CD8-positive, alpha-beta T cell (primary cell): ENCODE measurements at regions of chr17 and their contacts with region 1.

Region 1: GRCh38 chr17:43576563-43577229 is 30.6 kb upstream of the ETV4 start:
- DNase-seq: peak; percentile 37 to 83 (median 59)
- ATAC-seq: peak; percentile 71
- H3K4me3 ChIP-seq: no peak overlapping the region
- H3K4me3 Mint-ChIP-seq: no peak overlapping the region
- H3K27ac ChIP-seq: no peak overlapping the region
- H3K27ac Mint-ChIP-seq: no peak overlapping the region
- H3K4me1 ChIP-seq: peaks cover 14% of the 10 kb centered on the region
- H3K4me1 Mint-ChIP-seq: peaks cover 14% of the 10 kb centered on the region
- H3K27me3 ChIP-seq: no peaks in the 10 kb centered on the region
- H3K27me3 Mint-ChIP-seq: peaks cover 2% of the 10 kb centered on the region
- CTCF ChIP-seq: peak; percentile 98

Region 2: DNA sequence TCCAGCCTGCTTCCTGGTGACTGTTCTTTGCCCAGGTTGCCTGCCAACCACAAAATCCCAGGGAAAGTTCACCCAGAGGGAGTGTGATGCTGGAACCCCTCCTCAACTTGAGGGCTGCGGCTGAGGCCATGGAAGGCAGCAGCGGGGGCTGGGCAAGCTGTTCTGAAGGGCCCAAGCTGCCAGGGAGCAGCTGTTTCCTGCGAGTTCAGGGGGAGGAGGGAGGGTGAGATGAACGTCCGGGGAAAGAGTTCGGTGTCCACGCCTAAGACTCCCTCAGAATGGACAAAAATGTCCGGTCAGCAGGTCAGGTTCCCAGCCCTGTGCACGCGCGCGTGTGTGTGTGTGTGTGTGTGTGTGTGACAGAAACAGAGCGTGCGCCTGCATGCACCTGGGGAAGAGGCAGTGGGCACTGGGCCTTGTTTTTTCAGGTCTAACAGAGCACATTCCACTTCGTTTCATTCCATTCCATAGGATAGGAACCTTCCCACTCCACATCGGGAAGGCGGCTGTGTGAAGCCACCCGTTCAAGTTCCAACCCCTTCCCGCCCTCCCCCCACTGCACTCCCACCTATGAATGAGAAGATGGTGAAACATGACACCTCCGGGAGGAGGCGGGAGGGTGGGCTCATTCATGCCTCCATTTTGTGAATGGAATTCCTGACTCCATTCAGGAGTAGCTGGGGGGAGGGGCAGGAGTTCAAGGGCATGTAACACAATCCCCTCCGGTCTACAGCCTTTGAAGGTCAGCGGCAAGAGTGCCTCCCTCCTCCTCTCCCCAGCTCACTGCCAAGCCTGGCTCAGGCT is 46.2 kb before region 1 on chr17:
- CTCF ChIA-PET with region 1: no interaction called
- POLR2A ChIA-PET with region 1: no interaction called
- intact Hi-C with region 1: no loop called
- DNase-seq: no peak
- ATAC-seq: no peak
- H3K4me3 ChIP-seq: no peak overlapping the region
- H3K4me3 Mint-ChIP-seq: no peak overlapping the region
- H3K27ac ChIP-seq: no peak overlapping the region
- H3K27ac Mint-ChIP-seq: no peak overlapping the region
- H3K4me1 ChIP-seq: no peaks in the 10 kb centered on the region
- H3K4me1 Mint-ChIP-seq: no peaks in the 10 kb centered on the region
- H3K27me3 ChIP-seq: no peaks in the 10 kb centered on the region
- H3K27me3 Mint-ChIP-seq: no peaks in the 10 kb centered on the region
- CTCF ChIP-seq: no peak

Region 3: GRCh38 chr17:43645765-43646481 is 69.2 kb after region 1 on chr17:
- CTCF ChIA-PET with region 1: interaction called, 17 read pairs
- POLR2A ChIA-PET with region 1: no interaction called
- intact Hi-C with region 1: no loop called
- DNase-seq: peak in 5 of 9 experiments; percentile 6 to 33 (median 19)
- ATAC-seq: peak; percentile 51
- H3K4me3 ChIP-seq: peak overlapping the region in 1 of 2 experiments; percentile 30
- H3K4me3 Mint-ChIP-seq: peak overlapping the region; percentile 55
- H3K27ac ChIP-seq: no peak overlapping the region
- H3K27ac Mint-ChIP-seq: peak overlapping the region; percentile 32
- H3K4me1 ChIP-seq: peaks cover 1% of the 10 kb centered on the region
- H3K4me1 Mint-ChIP-seq: peaks cover 18% of the 10 kb centered on the region
- H3K27me3 ChIP-seq: no peaks in the 10 kb centered on the region
- H3K27me3 Mint-ChIP-seq: peaks cover 16% of the 10 kb centered on the region
- CTCF ChIP-seq: no peak

Region 4: DNA sequence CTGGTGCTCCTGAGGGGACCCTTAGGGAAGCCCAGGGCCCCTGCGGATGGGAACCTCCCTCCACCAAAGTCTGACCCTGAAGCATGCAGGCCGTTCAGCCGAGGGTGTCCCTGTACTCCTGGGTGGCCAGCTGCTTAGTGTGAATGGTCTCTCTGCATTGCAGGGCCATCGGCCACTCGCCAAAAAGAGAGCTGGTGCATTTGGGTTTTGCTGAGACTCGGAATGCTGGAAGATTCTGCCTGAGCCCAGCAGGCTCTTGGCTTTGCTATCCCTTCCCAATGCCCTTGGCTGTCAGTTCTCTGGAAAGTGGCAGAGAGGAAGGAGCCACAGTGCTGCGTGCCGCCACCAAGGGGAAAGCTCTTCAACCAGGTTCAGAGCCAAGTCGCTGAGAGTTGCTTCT is 82.2 kb after region 1 on chr17:
- CTCF ChIA-PET with region 1: interaction called, 11 read pairs
- POLR2A ChIA-PET with region 1: no interaction called
- intact Hi-C with region 1: no loop called
- DNase-seq: no peak
- ATAC-seq: no peak
- H3K4me3 ChIP-seq: no peak overlapping the region
- H3K4me3 Mint-ChIP-seq: no peak overlapping the region
- H3K27ac ChIP-seq: no peak overlapping the region
- H3K27ac Mint-ChIP-seq: no peak overlapping the region
- H3K4me1 ChIP-seq: peaks cover 19% of the 10 kb centered on the region
- H3K4me1 Mint-ChIP-seq: peaks cover 32% of the 10 kb centered on the region
- H3K27me3 ChIP-seq: no peaks in the 10 kb centered on the region
- H3K27me3 Mint-ChIP-seq: peaks cover 3% of the 10 kb centered on the region
- CTCF ChIP-seq: no peak

Region 5: GRCh38 chr17:43665084-43665936 is 88.6 kb after region 1 on chr17:
- CTCF ChIA-PET with region 1: interaction called, 11 read pairs
- POLR2A ChIA-PET with region 1: no interaction called
- intact Hi-C with region 1: no loop called
- DNase-seq: no peak
- ATAC-seq: no peak
- H3K4me3 ChIP-seq: no peak overlapping the region
- H3K4me3 Mint-ChIP-seq: no peak overlapping the region
- H3K27ac ChIP-seq: no peak overlapping the region
- H3K27ac Mint-ChIP-seq: no peak overlapping the region
- H3K4me1 ChIP-seq: peaks cover 23% of the 10 kb centered on the region
- H3K4me1 Mint-ChIP-seq: peaks cover 24% of the 10 kb centered on the region
- H3K27me3 ChIP-seq: no peaks in the 10 kb centered on the region
- H3K27me3 Mint-ChIP-seq: peaks cover 2% of the 10 kb centered on the region
- CTCF ChIP-seq: no peak

Region 6: GRCh38 chr17:43673516-43674323 is 97.0 kb after region 1 on chr17:
- CTCF ChIA-PET with region 1: no interaction called
- POLR2A ChIA-PET with region 1: interaction called, 5 read pairs
- intact Hi-C with region 1: loop called (anchors 1 kb)
- DNase-seq: peak; percentile 53 to 79 (median 72)
- ATAC-seq: peak; percentile 76
- H3K4me3 ChIP-seq: no peak overlapping the region
- H3K4me3 Mint-ChIP-seq: no peak overlapping the region
- H3K27ac ChIP-seq: no peak overlapping the region
- H3K27ac Mint-ChIP-seq: no peak overlapping the region
- H3K4me1 ChIP-seq: peaks cover 9% of the 10 kb centered on the region
- H3K4me1 Mint-ChIP-seq: peaks cover 11% of the 10 kb centered on the region
- H3K27me3 ChIP-seq: no peaks in the 10 kb centered on the region
- H3K27me3 Mint-ChIP-seq: peaks cover 2% of the 10 kb centered on the region
- CTCF ChIP-seq: peak; percentile 86

Region 7: GRCh38 chr17:43760254-43760852 is 183.7 kb after region 1 on chr17:
- CTCF ChIA-PET with region 1: interaction called, 13 read pairs
- POLR2A ChIA-PET with region 1: no interaction called
- intact Hi-C with region 1: loop called (anchors 1 to 2 kb)
- DNase-seq: peak; percentile 76 to 92 (median 88)
- ATAC-seq: peak; percentile 98
- H3K4me3 ChIP-seq: no peak overlapping the region
- H3K4me3 Mint-ChIP-seq: no peak overlapping the region
- H3K27ac ChIP-seq: no peak overlapping the region
- H3K27ac Mint-ChIP-seq: no peak overlapping the region
- H3K4me1 ChIP-seq: no peaks in the 10 kb centered on the region
- H3K4me1 Mint-ChIP-seq: no peaks in the 10 kb centered on the region
- H3K27me3 ChIP-seq: peaks cover 0 to 7% of the 10 kb centered on the region in 2 experiments
- H3K27me3 Mint-ChIP-seq: peaks cover 22% of the 10 kb centered on the region
- CTCF ChIP-seq: peak; percentile 89

Region 8: DNA sequence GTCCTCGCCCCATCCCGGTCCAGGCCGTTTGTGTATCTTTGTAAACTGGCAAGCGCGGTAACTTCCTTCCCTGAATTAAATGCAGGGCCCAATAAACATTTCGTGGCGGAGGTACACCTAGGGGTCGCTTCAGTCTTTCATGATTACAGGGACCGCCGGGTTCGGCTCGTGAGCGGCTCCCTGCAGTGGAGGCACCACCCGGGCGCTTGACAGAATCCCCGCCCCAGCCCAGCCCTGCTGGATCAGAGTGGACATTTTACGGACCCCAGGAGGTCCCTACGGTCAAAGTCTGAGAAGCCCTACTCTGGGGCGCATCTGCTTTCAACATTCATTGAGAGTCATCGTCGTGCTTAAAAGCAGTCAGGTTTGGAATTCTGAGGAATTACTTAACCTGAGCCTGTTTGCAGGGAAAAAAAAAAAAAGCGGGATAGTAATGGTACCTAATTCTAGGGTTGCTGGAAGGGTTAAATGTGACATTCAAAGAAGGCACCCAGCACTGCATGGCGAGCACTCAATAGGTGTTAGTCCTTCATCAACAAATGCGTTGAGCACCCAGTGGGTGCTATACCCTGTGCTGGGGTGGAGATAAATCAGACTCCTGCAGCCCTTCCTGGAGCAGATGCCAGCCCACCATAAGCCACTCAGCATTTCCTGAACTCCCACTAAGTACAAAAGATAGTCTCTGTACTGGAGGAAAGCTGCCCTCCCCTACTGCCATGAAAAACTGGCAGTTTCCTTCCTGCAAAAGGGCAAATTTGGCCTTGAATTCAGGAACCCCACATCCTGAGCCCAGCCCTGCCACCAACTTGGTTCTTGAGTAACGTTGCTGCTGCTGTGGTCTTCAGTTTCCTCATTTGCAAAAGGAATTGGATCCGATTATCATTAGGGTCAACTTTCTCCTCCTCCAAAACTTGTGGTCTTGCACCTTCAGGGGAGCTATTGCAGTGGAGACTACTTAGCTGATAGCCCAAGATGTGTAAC is 202.7 kb after region 1 on chr17:
- CTCF ChIA-PET with region 1: no interaction called
- POLR2A ChIA-PET with region 1: no interaction called
- intact Hi-C with region 1: no loop called
- DNase-seq: no peak
- ATAC-seq: peak; percentile 47
- H3K4me3 ChIP-seq: peak overlapping the region; percentile 75 to 88
- H3K4me3 Mint-ChIP-seq: peak overlapping the region; percentile 78
- H3K27ac ChIP-seq: peak overlapping the region; percentile 43 to 44
- H3K27ac Mint-ChIP-seq: no peak overlapping the region
- H3K4me1 ChIP-seq: peaks cover 11% of the 10 kb centered on the region
- H3K4me1 Mint-ChIP-seq: peaks cover 10% of the 10 kb centered on the region
- H3K27me3 ChIP-seq: no peaks in the 10 kb centered on the region
- H3K27me3 Mint-ChIP-seq: peaks cover 37% of the 10 kb centered on the region
- CTCF ChIP-seq: no peak